Naive thymus-derived CD4-positive, alpha-beta T cell (primary cell): ENCODE measurements at regions of chr13 and their contacts with region 1.

Region 1: GRCh38 chr13:33610471-33611015 is 207.4 kb upstream of the RFC3 start:
- DNase-seq: peak in 5 of 9 donors; percentile 1 to 53 (median 6)
- ATAC-seq: peak; percentile 75
- H3K4me3 ChIP-seq: peak overlapping the region; percentile 14
- H3K4me3 Mint-ChIP-seq: peak overlapping the region; percentile 6 to 84 (median 67)
- H3K27ac ChIP-seq: no peak overlapping the region
- H3K27ac Mint-ChIP-seq: peak overlapping the region in 8 of 9 donors; percentile 34 to 90 (median 70)
- H3K4me1 ChIP-seq: peaks cover 7 to 8% of the 10 kb centered on the region in 2 donors
- H3K4me1 Mint-ChIP-seq: peaks cover 12 to 35% (median 29%) of the 10 kb centered on the region in 7 donors
- H3K27me3 ChIP-seq: no peaks in the 10 kb centered on the region
- H3K27me3 Mint-ChIP-seq: peaks cover 0 to 12% (median 5%) of the 10 kb centered on the region in 5 donors

Region 2: GRCh38 chr13:33139184-33139583 is 471.4 kb before region 1 on chr13:
- CTCF ChIA-PET with region 1: no interaction called
- POLR2A ChIA-PET with region 1: no interaction called
- intact Hi-C with region 1: no loop called
- DNase-seq: no peak
- ATAC-seq: no peak
- H3K4me3 ChIP-seq: no peak overlapping the region
- H3K4me3 Mint-ChIP-seq: no peak overlapping the region
- H3K27ac ChIP-seq: no peak overlapping the region
- H3K27ac Mint-ChIP-seq: no peak overlapping the region
- H3K4me1 ChIP-seq: no peaks in the 10 kb centered on the region
- H3K4me1 Mint-ChIP-seq: no peaks in the 10 kb centered on the region
- H3K27me3 ChIP-seq: no peaks in the 10 kb centered on the region
- H3K27me3 Mint-ChIP-seq: peaks cover 0 to 16% (median under 1%) of the 10 kb centered on the region in 5 donors

Region 3: DNA sequence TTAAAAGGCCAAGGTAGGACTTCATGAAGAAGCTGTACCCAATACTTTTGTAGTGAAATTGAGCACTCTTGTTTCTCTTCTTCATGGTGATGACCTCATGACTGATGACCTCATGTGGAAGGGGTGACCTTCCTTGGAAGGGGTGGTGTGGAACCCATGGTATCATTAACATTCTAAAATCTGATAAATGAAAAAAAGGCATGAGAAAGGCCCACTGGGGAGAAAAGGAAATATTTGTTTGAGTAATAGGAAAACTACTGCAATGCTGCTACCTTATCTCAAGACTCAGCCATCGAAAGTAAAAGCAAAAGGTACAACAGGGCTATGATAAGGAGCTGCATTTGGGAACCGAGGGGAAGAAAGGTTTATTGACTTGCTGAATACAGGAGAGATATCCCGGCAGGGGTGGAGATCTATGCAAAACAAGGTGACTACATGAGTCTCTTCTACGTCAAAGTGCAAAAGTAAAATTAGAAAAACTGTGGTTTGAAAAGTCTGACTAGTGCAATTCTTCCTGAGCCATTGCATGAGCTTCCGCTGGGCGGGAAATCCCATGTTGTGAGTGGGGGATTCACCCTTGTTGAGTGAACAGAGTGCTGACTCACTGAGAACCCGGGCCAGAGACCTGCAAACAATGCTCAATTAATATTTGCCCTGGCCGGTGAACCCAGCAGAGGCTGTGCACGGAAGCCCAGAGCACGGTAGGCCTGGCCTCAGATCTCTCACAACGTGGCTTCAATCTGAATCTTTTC is 68.5 kb after region 1 on chr13:
- CTCF ChIA-PET with region 1: no interaction called
- POLR2A ChIA-PET with region 1: no interaction called
- intact Hi-C with region 1: loop called in 1 of 2 experiments (anchors 1 kb)
- DNase-seq: peak in 1 of 9 donors; percentile 76
- ATAC-seq: peak; percentile 86
- H3K4me3 ChIP-seq: peak overlapping the region; percentile 29
- H3K4me3 Mint-ChIP-seq: peak overlapping the region in 5 of 10 donors; percentile 16 to 64 (median 49)
- H3K27ac ChIP-seq: no peak overlapping the region
- H3K27ac Mint-ChIP-seq: peak overlapping the region in 2 of 9 donors; percentile 76 to 91
- H3K4me1 ChIP-seq: peaks cover 0 to 11% of the 10 kb centered on the region in 2 donors
- H3K4me1 Mint-ChIP-seq: peaks cover 7 to 26% (median 11%) of the 10 kb centered on the region in 7 donors
- H3K27me3 ChIP-seq: no peaks in the 10 kb centered on the region
- H3K27me3 Mint-ChIP-seq: peaks cover 0 to 8% (median 0%) of the 10 kb centered on the region in 5 donors